ENCODE measurements at regions of chr11 and their contacts with region 1.

Region 1: DNA sequence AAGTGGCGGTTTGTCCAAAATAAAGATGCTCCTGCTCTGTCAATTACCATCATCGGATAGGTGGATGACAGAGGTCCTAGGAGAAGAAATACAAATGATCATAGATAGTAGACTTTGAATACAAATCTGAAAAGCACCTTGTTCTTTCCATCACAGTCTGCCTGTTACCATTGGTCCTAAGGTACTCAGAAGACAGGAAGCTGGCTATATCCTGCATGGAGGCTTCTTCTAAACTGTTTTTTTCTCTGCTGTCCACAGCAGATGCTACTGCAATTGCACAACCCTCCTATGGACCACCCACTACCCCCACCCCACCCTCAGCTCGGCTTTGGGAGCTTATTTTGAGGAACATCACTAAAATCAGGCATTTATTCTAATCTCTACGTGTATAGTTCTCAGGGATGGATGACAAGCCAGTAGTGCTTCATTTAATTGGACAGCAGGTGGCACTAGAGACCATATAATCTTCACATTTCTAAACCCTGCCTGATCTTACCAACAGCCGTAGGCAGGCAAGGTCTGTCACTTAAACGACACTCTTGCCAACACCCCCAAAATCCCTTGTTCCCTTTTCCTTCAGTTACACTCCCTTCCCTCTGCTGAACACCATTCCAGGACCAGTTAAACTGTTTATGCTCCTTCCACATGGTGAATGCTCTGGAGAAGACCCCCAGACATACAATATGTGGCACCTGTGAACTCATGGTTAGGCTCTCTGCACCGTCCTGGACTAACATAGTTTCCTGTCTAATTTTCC is 6.6 kb upstream of the PTS start:
- DNase-seq: peak; percentile 74
- CTCF ChIP-seq: peak; percentile 73

Region 2: GRCh38 chr11:112280268-112281126 is 60.8 kb after region 1 on chr11:
- in situ Hi-C with region 1: loop called (anchors 10 kb)
- DNase-seq: peak; percentile 83
- CTCF ChIP-seq: peak; percentile 75